ENCODE measurements at regions of chr5 and their contacts with region 1.

Region 1: GRCh38 chr5:125835293-125836172 is 587.7 kb upstream of the GRAMD2B start:
- DNase-seq: peak; percentile 1
- ATAC-seq: peak; percentile 87
- H3K4me3 ChIP-seq: no peak overlapping the region
- H3K27ac ChIP-seq: no peak overlapping the region
- H3K4me1 ChIP-seq: no peaks in the 10 kb centered on the region
- H3K27me3 ChIP-seq: no peaks in the 10 kb centered on the region
- CTCF ChIP-seq: peak; percentile 47
- EP300 ChIP-seq: no peak
- POLR2A ChIP-seq: no peak
- RAD21 ChIP-seq: peak; percentile 40; the same call in 1 of the 2 replicates

Region 2: GRCh38 chr5:124524552-124525232 is 1310.8 kb before region 1 on chr5:
- CTCF ChIA-PET with region 1: no interaction called
- POLR2A ChIA-PET with region 1: no interaction called
- in situ Hi-C with region 1: no loop called
- intact Hi-C with region 1: loop called (anchors 10 kb)
- DNase-seq: peak; percentile 31
- ATAC-seq: peak; percentile 77
- H3K4me3 ChIP-seq: no peak overlapping the region
- H3K27ac ChIP-seq: no peak overlapping the region
- H3K4me1 ChIP-seq: peaks cover 30% of the 10 kb centered on the region
- H3K27me3 ChIP-seq: peaks cover 0 to 3% of the 10 kb centered on the region in 2 experiments; a peak in 1 of 5 replicates
- CTCF ChIP-seq: peak; percentile 58
- EP300 ChIP-seq: no peak
- POLR2A ChIP-seq: no peak
- RAD21 ChIP-seq: peak; percentile 44; the same call in 1 of the 2 replicates